HEK293 (cell line): ENCODE measurements at regions of chr3 and their contacts with region 1.

Region 1: DNA sequence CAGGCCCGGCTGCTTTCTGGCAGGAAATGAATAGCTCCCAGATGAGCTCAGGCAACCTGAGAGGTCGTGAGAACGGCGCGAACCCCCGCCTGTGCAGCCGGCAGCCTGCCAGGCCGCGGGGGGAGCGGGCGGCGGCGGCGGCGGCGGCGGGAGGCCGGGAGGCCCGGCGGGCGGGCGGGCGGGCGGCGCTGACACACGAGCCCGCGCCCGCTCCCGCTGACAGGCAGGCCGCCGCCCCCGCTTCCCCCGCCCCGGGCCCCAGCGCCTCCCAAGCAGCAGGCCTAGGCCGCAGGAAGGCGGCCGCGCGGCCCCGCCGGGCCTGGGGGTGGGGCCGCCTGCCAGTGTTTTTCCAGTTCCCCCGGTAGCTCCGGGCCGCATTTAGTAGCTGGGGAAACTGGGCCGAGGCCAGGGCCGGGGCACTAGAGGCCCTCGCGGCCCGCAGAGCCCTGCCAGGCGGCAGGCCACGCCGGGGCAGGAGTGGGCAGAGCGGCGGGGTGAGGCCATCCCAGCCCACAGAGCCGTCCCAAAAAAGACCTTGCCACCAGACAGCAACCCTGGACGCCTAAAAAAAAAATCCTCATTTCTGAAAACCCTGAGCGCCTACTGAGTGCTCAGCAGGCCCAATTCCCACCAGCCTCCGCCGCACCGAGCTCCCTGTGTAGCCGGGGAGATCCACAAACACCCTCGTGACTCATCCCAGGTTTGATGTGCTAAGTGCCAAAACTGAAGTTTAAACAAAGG is 5.6 kb downstream of the HES1 start:
- H3K4me3 ChIP-seq: peak overlapping the region; percentile 16
- H3K27ac ChIP-seq: peak overlapping the region; percentile 100
- H3K4me1 ChIP-seq: peaks cover 9% of the 10 kb centered on the region
- CTCF ChIP-seq: 0 out of 2 replicates have a peak, but pooled peaks have one; percentile 29

Region 2: DNA sequence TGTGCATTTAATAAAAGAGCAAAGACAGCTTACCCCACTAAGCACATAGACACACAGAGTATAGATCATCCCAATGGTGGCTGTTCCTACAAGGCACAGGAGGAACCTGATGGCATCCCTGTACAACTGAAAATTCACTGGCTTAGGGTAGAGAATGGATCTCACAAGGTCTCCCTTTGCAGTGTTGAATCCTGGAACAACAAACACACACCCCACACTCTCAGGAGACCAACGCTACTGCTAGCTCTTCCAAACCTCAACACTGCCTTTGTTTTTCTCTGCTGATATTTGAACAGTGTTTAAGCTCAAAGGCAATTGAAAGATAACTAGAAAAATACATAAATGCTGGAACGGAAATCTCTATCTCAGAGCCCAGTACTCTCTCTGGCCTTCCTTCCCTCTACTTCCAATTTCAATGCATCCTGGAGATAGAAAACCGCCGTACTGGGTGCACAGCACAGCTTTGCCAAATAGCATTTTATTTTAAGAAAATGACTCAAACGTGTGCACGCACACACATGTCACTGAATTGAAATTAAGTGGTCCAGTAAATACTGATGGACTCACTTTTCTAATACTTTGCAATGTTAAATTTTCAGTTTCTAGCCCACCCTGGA is 675.5 kb before region 1 on chr3:
- CTCF ChIA-PET with region 1: no interaction called
- POLR2A ChIA-PET with region 1: no interaction called
- H3K4me3 ChIP-seq: no peak overlapping the region
- H3K27ac ChIP-seq: no peak overlapping the region
- H3K4me1 ChIP-seq: no peaks in the 10 kb centered on the region
- CTCF ChIP-seq: no peak

Region 3: DNA sequence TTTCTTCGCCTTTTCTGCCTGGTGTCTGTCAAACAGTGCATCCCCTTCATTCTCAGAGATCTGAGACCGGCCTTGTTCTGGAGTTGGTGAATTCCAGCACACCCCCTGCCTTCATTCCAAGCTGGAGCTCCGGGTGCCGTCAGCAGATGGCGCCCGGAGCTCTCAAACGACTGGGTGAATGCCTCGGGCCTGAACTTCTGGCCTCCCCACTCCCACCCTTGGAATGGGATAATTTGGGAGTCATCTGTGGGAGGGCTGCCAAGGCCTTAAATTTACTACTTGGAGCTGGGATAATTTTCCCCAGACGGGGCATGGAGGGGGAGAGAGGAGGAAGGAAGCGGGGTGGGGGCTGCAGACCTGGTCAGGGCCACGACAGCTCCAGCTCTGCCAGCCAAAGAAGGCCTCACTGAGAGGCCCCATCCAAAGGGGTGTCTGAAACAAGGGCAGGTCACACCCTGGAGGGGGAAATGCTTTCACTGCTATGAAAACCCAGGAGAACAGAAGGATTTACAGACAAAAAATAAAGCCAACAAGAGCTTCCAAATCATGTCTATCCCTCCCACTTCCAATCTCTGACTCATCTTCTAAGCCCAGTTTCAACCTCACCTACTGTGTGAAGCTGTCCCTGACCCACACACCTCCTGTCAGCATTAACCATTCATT is 360.6 kb before region 1 on chr3:
- CTCF ChIA-PET with region 1: interaction called, 13 read pairs
- POLR2A ChIA-PET with region 1: interaction called, 116 read pairs
- H3K4me3 ChIP-seq: no peak overlapping the region
- H3K27ac ChIP-seq: peak overlapping the region; percentile 42; the same call in 1 of the 2 replicates
- H3K4me1 ChIP-seq: peaks cover 8% of the 10 kb centered on the region
- CTCF ChIP-seq: no peak

Region 4: DNA sequence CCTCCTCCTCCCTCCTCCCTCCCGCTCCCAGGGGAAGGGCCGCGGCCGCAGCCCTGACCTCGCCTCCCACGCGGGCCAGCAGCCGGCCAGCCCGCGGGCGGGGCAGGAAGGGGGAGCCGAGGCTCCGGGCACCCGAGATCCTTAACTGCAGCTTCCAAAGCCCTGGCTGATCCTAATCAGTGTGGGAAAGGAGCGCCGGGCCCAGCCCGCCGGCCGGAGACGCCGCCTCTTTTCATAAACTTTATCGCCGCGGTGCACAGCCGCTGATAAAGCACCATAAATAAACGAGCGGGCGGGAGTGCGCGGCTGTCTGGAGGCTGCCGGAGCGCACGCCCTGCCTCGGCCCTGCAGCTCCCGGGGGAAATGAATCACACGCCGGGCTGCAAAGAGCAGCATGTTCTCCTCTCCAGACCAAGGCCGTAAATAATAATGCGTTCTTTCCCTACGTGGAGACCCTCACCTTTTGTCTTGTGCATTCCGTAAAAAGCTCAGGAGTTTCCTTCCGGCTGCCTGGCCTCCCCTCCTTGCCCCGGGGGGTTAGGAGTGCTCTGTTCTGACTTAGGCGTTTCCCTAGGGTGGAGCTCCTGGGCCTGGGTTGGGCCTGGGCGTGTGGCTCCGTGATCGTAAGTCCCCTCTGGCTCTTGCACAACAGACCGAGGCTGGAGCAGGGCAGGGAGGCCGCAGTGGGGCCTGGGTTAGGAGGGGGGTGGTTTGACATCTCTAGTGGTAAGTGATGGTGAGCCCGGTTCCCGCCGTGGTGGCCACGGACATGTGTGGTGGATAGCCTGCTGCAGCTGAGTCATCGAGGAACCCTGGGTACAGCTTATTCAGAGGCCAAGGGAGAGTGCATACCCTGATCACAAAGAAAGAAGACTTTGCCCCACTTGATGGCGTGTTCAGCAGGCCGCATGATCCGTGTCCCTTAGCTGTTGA is 138.2 kb before region 1 on chr3:
- CTCF ChIA-PET with region 1: no interaction called
- POLR2A ChIA-PET with region 1: interaction called, 50 read pairs
- H3K4me3 ChIP-seq: peak overlapping the region; percentile 24
- H3K27ac ChIP-seq: peak overlapping the region; percentile 93
- H3K4me1 ChIP-seq: peaks cover 4% of the 10 kb centered on the region
- CTCF ChIP-seq: no peak

Region 5: DNA sequence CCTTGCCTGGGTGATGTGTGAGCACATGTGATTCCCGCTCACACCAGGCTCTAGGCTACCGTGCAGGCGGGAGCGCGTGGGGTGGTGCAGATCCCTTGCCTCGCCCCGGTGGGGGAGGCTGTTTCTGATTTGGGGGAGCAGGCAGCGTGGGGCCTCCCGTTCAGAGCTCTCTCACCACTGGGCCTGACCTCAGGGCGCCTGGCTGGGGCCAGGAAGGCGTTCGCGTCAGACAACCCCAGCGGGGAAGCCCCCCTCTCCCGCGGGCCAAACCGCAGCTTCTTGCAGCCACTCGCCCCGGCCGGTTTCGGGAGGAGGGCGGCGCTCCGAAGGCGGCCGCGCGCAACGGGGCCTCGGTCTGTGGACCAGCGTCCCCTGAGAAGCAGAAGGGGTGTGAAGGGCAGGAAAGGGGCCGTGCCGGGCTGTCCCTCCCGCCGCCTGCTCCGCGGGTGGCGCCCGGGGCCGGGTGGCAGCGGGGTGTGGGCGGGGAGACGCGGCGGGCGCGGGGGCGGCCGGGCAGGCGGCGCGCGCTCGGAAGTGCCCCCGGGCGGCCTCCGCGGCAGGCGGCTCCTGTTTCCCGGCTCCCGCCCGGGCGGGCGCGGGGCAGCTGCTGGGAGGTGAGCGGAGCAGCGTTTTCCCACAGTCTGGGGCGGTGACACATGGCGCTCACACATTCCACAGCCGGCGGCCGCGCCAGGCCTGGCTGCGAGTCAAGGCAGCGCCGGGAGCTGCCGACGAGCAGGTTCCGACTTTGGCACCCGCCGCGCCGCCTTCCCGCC is 70.8 kb before region 1 on chr3:
- CTCF ChIA-PET with region 1: interaction called, 3 read pairs
- POLR2A ChIA-PET with region 1: interaction called, 14 read pairs
- H3K4me3 ChIP-seq: peak overlapping the region; percentile 34
- H3K27ac ChIP-seq: peak overlapping the region; percentile 85
- H3K4me1 ChIP-seq: no peaks in the 10 kb centered on the region
- CTCF ChIP-seq: no peak

Region 6: GRCh38 chr3:194315088-194315964 is 173.7 kb after region 1 on chr3:
- CTCF ChIA-PET with region 1: interaction called, 25 read pairs
- POLR2A ChIA-PET with region 1: interaction called, 145 read pairs
- H3K4me3 ChIP-seq: peak overlapping the region; percentile 33
- H3K27ac ChIP-seq: peak overlapping the region; percentile 83
- H3K4me1 ChIP-seq: no peaks in the 10 kb centered on the region; the same call in 1 of the 2 replicates
- CTCF ChIP-seq: peak; percentile 88

Region 7: GRCh38 chr3:194447161-194447560 is 305.6 kb after region 1 on chr3:
- CTCF ChIA-PET with region 1: no interaction called
- POLR2A ChIA-PET with region 1: no interaction called
- H3K4me3 ChIP-seq: no peak overlapping the region
- H3K27ac ChIP-seq: no peak overlapping the region
- H3K4me1 ChIP-seq: no peaks in the 10 kb centered on the region
- CTCF ChIP-seq: no peak